ENCODE measurements at regions of chr9 and their contacts with region 1.

Region 1: GRCh38 chr9:20473515-20474013 is 148.7 kb downstream of the MLLT3 start:
- DNase-seq: no peak
- H3K4me3 ChIP-seq: no peak overlapping the region
- H3K27ac ChIP-seq: no peak overlapping the region
- H3K4me1 ChIP-seq: peaks cover 0 to 7% (median 2%) of the 10 kb centered on the region in 4 experiments; a peak in 3 of 7 replicates
- H3K27me3 ChIP-seq: no peaks in the 10 kb centered on the region
- CTCF ChIP-seq: no peak
- EP300 ChIP-seq: no peak
- POLR2A ChIP-seq: no peak
- RAD21 ChIP-seq: no peak

Region 2: GRCh38 chr9:20220286-20220685 is 253.3 kb before region 1 on chr9:
- CTCF ChIA-PET with region 1: no interaction called
- POLR2A ChIA-PET with region 1: no interaction called
- DNase-seq: no peak
- H3K4me3 ChIP-seq: no peak overlapping the region
- H3K27ac ChIP-seq: no peak overlapping the region
- H3K4me1 ChIP-seq: no peaks in the 10 kb centered on the region
- H3K27me3 ChIP-seq: no peaks in the 10 kb centered on the region
- CTCF ChIP-seq: no peak
- EP300 ChIP-seq: no peak
- POLR2A ChIP-seq: no peak
- RAD21 ChIP-seq: no peak

Region 3: DNA sequence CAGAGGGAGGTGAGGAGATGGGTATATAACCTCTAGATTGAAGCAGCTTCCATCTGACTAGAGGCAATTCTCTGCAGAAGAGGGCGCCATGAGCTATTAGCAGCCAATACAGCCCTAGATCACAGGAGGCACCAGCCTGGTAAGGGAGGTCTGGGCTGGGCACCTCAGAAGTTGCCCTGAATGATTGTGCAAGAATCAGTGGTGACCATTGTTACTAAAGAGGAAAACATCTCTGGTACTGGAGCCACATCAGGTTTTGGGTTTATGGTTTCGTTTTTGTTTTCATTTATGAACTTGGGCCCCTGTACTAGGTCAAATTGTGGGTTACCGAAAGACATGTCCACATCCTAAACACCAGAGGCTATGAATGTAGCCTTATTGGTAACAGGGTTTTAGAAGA is 193.2 kb before region 1 on chr9:
- CTCF ChIA-PET with region 1: no interaction called
- POLR2A ChIA-PET with region 1: no interaction called
- DNase-seq: no peak
- H3K4me3 ChIP-seq: no peak overlapping the region
- H3K27ac ChIP-seq: no peak overlapping the region
- H3K4me1 ChIP-seq: peaks cover 0 to 7% (median 2%) of the 10 kb centered on the region in 4 experiments; a peak in 2 of 7 replicates
- H3K27me3 ChIP-seq: no peaks in the 10 kb centered on the region
- CTCF ChIP-seq: peak in 2 of 3 experiments; percentile 38 to 51; a peak in 2 of 4 replicates
- EP300 ChIP-seq: no peak
- POLR2A ChIP-seq: no peak
- RAD21 ChIP-seq: peak; percentile 45 to 66

Region 4: DNA sequence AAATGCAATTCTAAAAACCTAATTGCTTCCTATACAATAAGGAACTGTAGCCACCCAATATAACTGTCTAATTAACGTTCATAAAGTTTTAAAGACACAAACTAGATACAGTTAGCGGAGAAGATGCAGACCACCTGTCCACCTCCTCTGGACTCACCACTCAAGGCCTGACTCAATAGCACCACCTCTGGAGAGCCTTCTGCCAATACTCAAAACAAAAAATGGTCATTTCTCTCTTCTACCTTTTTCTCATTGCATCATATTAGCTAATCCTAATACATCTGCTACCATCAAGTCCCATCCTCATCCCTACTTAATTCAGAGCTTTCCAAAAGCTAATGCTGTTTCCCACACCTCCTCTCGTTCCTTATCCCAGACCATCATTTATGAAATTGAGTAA is 11.2 kb before region 1 on chr9:
- CTCF ChIA-PET with region 1: interaction called, 13 read pairs
- POLR2A ChIA-PET with region 1: interaction called, 4 read pairs
- DNase-seq: no peak
- H3K4me3 ChIP-seq: no peak overlapping the region
- H3K27ac ChIP-seq: no peak overlapping the region
- H3K4me1 ChIP-seq: no peaks in the 10 kb centered on the region
- H3K27me3 ChIP-seq: no peaks in the 10 kb centered on the region
- CTCF ChIP-seq: peak; percentile 45 to 60 (median 51)
- EP300 ChIP-seq: no peak
- POLR2A ChIP-seq: no peak
- RAD21 ChIP-seq: peak; percentile 43 to 58

Region 5: GRCh38 chr9:20518735-20519134 is 45.2 kb after region 1 on chr9:
- CTCF ChIA-PET with region 1: no interaction called
- POLR2A ChIA-PET with region 1: no interaction called
- DNase-seq: no peak
- H3K4me3 ChIP-seq: no peak overlapping the region
- H3K27ac ChIP-seq: no peak overlapping the region
- H3K4me1 ChIP-seq: no peaks in the 10 kb centered on the region
- H3K27me3 ChIP-seq: no peaks in the 10 kb centered on the region
- CTCF ChIP-seq: no peak
- EP300 ChIP-seq: no peak
- POLR2A ChIP-seq: no peak
- RAD21 ChIP-seq: no peak

Measured in H1 (cell line).